Breast epithelium (tissue), 4 donors: ENCODE measurements at regions of chr3 and their contacts with region 1.

Region 1: GRCh38 chr3:132606085-132606484 is 9.0 kb downstream of the ACKR4 start:
- DNase-seq: no peak
- H3K4me3 ChIP-seq: no peak overlapping the region
- H3K27ac ChIP-seq: no peak overlapping the region
- H3K4me1 ChIP-seq: no peaks in the 10 kb centered on the region
- H3K27me3 ChIP-seq: no peaks in the 10 kb centered on the region
- CTCF ChIP-seq: no peak
- POLR2A ChIP-seq: no peak

Region 2: DNA sequence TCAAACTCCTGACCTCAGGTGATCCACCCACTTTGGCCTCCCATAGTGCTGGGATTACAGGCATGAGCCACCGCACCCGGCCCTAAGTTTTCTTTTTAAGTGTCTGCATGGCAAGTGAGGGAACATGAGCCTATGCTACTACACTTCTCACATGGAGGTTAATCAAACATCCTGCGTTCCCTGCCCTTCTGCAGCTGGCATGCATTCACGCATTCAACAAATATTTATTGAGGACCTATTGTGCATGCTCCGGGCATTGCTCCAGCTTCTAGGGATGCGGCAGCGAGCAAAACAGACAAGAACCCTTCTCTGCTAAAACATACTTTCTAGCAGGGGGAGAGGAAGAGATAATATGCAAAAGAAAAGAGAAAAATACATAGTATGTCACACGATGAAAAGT is 51.6 kb before region 1 on chr3:
- intact Hi-C with region 1: no loop called
- DNase-seq: no peak
- H3K4me3 ChIP-seq: no peak overlapping the region
- H3K27ac ChIP-seq: no peak overlapping the region
- H3K4me1 ChIP-seq: no peaks in the 10 kb centered on the region
- H3K27me3 ChIP-seq: no peaks in the 10 kb centered on the region
- CTCF ChIP-seq: no peak
- POLR2A ChIP-seq: no peak

Region 3: GRCh38 chr3:132569153-132569552 is 36.9 kb before region 1 on chr3:
- intact Hi-C with region 1: no loop called
- DNase-seq: no peak
- H3K4me3 ChIP-seq: no peak overlapping the region
- H3K27ac ChIP-seq: no peak overlapping the region
- H3K4me1 ChIP-seq: no peaks in the 10 kb centered on the region
- H3K27me3 ChIP-seq: no peaks in the 10 kb centered on the region
- CTCF ChIP-seq: no peak
- POLR2A ChIP-seq: no peak

Region 4: DNA sequence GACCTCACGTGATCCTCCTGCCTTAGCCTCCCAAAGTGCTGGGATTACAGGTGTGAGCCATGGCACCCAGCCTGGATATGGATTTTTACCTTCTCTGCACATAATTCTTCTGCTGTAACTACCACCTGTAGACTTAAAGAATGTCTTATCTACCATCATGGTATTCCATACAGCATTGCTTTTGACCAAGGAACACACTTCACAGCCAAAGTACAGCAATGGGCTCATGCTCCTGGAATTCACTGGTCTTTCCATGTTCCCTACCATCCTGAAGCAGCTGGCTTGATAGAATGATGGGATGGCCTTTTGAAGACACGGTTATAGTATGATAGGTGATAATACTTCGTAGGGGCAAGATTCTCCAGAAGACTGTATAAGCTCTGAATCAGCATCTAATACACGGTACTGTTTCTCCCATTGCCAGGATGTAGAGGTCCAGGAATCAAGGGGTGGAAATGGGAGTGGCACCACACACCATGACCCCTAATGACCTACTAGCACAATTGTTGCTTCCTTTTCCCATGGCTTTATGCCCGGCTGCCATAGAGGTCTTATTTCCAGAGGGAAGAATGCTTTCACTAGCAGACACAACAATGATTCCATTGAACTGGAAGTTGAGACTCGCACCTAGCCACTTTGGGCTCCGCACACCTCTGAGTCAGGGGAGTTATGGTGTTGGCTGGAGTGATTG is 906.5 kb after region 1 on chr3:
- intact Hi-C with region 1: loop called (anchors 5 kb)
- DNase-seq: no peak
- H3K4me3 ChIP-seq: no peak overlapping the region
- H3K27ac ChIP-seq: no peak overlapping the region
- H3K4me1 ChIP-seq: no peaks in the 10 kb centered on the region
- H3K27me3 ChIP-seq: no peaks in the 10 kb centered on the region
- CTCF ChIP-seq: no peak
- POLR2A ChIP-seq: no peak

Region 5: GRCh38 chr3:134406331-134407238 is 1800.5 kb after region 1 on chr3:
- intact Hi-C with region 1: no loop called
- DNase-seq: no peak
- H3K4me3 ChIP-seq: peak overlapping the region; percentile 36 to 73 (median 54)
- H3K27ac ChIP-seq: peak overlapping the region; percentile 4 to 34
- H3K4me1 ChIP-seq: peaks cover 0 to 3% of the 10 kb centered on the region in 2 donors
- H3K27me3 ChIP-seq: no peaks in the 10 kb centered on the region
- CTCF ChIP-seq: no peak
- POLR2A ChIP-seq: no peak